PC-3 (cell line): ENCODE measurements at regions of chr17 and their contacts with region 1.

Region 1: GRCh38 chr17:17496189-17497064 is at the start of gene RASD1:
- DNase-seq: peak; percentile 94
- ATAC-seq: peak; percentile 77
- H3K4me3 ChIP-seq: peak within 1 kb of the TSS; percentile 86
- H3K27ac ChIP-seq: peak within 1 kb of the TSS; percentile 9; the same call in 1 of the 2 replicates
- H3K4me1 ChIP-seq: peaks cover 17% of the 10 kb centered on the region
- H3K27me3 ChIP-seq: no peaks in the 10 kb centered on the region
- CTCF ChIP-seq: peak; percentile 92
- total RNA-seq, gene RASD1: 59.0 and 82.6 TPM in 2 replicates

Region 2: DNA sequence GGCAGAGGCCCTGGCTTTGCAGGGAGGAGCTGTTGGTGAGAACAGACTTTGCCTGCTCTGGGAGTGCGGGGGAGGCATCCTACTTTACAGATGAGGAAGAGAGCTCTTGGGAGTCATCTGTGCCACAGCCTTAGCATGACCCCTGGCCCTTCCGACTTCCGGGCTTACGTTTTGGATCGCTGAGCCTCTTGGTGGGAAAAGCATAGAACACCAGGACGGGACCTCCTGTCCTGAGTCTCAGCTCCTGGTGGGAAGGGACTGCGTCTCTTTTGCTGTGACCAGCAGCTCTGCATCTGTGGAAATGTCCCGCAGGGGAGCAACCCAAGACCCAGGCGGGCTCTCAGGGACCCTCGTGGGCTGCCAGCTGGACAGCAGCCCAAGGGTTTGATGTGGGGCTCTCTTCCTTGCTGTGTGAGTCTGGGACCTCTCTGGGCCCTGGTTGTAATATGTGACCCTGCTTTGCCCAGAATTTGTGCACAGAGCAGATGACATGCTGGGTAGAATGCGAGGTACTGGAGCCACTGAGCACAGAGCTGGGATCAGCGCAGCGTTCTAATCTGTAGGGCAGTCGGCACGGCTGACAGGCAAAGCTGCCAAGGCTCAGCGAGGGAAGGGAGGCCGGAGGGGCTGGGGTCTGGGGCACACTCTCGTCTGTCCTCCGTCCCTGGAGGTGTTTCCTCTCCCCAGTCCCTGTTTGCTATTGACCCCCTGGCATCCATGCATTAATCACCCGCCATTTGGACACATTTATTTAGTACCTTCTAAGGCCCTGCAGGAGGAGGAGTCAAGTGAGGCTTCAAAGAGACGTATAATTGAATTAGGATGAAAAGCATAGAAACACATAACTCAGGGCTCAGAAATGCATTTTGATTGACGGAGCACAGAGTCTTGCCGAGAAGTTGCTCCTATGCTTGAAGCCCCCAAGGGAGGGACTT is 129.2 kb before region 1 on chr17:
- CTCF ChIA-PET with region 1: no interaction called
- POLR2A ChIA-PET with region 1: interaction called, 10 read pairs
- intact Hi-C with region 1: no loop called
- DNase-seq: no peak
- ATAC-seq: no peak
- H3K4me3 ChIP-seq: no peak overlapping the region
- H3K27ac ChIP-seq: no peak overlapping the region
- H3K4me1 ChIP-seq: peaks cover 9% of the 10 kb centered on the region
- H3K27me3 ChIP-seq: no peaks in the 10 kb centered on the region
- CTCF ChIP-seq: no peak

Region 3: GRCh38 chr17:17445925-17446665 is 50.3 kb before region 1 on chr17:
- CTCF ChIA-PET with region 1: no interaction called
- POLR2A ChIA-PET with region 1: interaction called, 10 read pairs
- intact Hi-C with region 1: no loop called
- DNase-seq: peak; percentile 99
- ATAC-seq: peak; percentile 84
- H3K4me3 ChIP-seq: peak overlapping the region; percentile 10; the same call in 1 of the 2 replicates
- H3K27ac ChIP-seq: peak overlapping the region; percentile 91
- H3K4me1 ChIP-seq: peaks cover 41% of the 10 kb centered on the region
- H3K27me3 ChIP-seq: no peaks in the 10 kb centered on the region
- CTCF ChIP-seq: peak; percentile 48; the same call in 1 of the 2 replicates

Region 4: DNA sequence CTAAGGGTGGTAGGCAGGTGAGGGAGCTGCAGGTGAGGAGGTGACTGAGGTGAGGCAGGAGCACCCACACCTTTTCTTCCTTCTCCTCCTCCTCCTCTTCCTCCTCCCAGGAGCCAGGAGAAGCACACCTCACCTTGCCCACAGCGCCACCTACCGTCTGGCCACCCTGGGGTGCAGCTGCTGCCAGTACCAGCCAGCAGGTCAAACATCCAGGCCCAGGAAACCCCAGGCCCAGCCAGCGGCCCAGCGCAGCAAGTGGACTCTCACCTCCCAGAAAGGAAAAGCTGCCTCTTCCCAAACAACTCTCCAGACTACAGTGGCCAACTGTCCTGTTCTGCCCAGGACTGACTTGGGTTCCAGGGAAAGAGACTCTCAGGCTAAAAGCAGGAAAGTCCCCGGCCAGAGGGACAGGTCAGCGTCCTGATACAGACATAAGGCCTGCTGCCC is 72.3 kb after region 1 on chr17:
- CTCF ChIA-PET with region 1: interaction called, 12 read pairs
- POLR2A ChIA-PET with region 1: no interaction called
- intact Hi-C with region 1: loop called (anchors 1 kb)
- DNase-seq: peak; percentile 85
- ATAC-seq: peak; percentile 60; the same call in 1 of the 2 replicates
- H3K4me3 ChIP-seq: no peak overlapping the region
- H3K27ac ChIP-seq: no peak overlapping the region
- H3K4me1 ChIP-seq: no peaks in the 10 kb centered on the region
- H3K27me3 ChIP-seq: no peaks in the 10 kb centered on the region
- CTCF ChIP-seq: peak; percentile 93